ENCODE measurements at regions of chr17 and their contacts with region 1.

Region 1: GRCh38 chr17:56939901-56940343 is 20.9 kb downstream of the COIL start:
- DNase-seq: no peak
- H3K4me3 ChIP-seq: no peak overlapping the region
- H3K27ac ChIP-seq: no peak overlapping the region
- H3K4me1 ChIP-seq: peaks cover 0 to 8% of the 10 kb centered on the region in 2 donors
- H3K27me3 ChIP-seq: no peaks in the 10 kb centered on the region
- CTCF ChIP-seq: peak; percentile 52 to 83 (median 72)
- POLR2A ChIP-seq: no peak

Region 2: GRCh38 chr17:56819431-56820145 is 120.3 kb before region 1 on chr17:
- intact Hi-C with region 1: loop called (anchors 2 to 5 kb)
- DNase-seq: peak; percentile 64 to 89 (median 77)
- H3K4me3 ChIP-seq: no peak overlapping the region
- H3K27ac ChIP-seq: no peak overlapping the region
- H3K4me1 ChIP-seq: no peaks in the 10 kb centered on the region
- H3K27me3 ChIP-seq: no peaks in the 10 kb centered on the region
- CTCF ChIP-seq: peak; percentile 84 to 92 (median 88)
- POLR2A ChIP-seq: no peak